A549 (cell line): ENCODE measurements at regions of chr1 and their contacts with region 1.

Region 1: DNA sequence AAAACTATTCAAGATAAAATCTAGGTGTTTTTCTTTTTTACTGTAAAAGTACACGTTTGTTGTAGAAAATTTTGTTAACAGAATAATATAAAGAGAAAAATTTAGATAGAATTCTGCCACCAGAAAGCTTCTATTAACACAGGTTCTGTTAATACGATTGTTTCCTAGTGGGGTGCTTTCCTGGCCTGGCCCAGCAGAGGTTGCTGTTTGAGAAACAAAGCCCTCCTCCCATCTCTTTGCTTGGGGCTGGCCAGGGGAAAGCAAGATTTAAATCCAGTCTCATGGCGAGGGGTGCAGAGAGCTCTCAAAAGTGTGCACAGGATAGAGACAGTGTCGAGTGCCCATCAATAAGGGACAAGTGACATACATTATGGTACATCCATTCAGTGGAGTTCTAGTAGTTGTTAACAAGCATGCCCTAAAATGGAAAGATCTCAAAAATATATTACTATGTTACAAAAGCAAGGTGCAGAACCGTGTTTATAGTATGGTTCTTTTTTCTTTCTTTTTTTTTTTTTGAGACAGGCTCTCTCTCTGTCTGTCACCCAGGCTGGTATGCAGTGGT is 14.6 kb upstream of the ACBD3 start:
- DNase-seq: peak in 1 of 2 experiments; percentile 21
- ATAC-seq: peak in 1 of 2 experiments; percentile 41; a peak in 4 of 6 replicates
- H3K4me3 ChIP-seq: no peak overlapping the region
- H3K27ac ChIP-seq: no peak overlapping the region
- H3K4me1 ChIP-seq: no peaks in the 10 kb centered on the region
- CTCF ChIP-seq: no peak
- EP300 ChIP-seq: no peak
- POLR2A ChIP-seq: no peak
- RAD21 ChIP-seq: peak in 1 of 2 experiments; percentile 42; a peak in 1 of 5 replicates

Region 2: GRCh38 chr1:225808136-225808535 is 393.0 kb before region 1 on chr1:
- CTCF ChIA-PET with region 1: no interaction called
- POLR2A ChIA-PET with region 1: no interaction called
- DNase-seq: no peak
- ATAC-seq: no peak
- H3K4me3 ChIP-seq: no peak overlapping the region
- H3K27ac ChIP-seq: no peak overlapping the region
- H3K4me1 ChIP-seq: peaks cover 22% of the 10 kb centered on the region
- CTCF ChIP-seq: no peak
- EP300 ChIP-seq: no peak
- POLR2A ChIP-seq: no peak
- RAD21 ChIP-seq: no peak

Region 3: DNA sequence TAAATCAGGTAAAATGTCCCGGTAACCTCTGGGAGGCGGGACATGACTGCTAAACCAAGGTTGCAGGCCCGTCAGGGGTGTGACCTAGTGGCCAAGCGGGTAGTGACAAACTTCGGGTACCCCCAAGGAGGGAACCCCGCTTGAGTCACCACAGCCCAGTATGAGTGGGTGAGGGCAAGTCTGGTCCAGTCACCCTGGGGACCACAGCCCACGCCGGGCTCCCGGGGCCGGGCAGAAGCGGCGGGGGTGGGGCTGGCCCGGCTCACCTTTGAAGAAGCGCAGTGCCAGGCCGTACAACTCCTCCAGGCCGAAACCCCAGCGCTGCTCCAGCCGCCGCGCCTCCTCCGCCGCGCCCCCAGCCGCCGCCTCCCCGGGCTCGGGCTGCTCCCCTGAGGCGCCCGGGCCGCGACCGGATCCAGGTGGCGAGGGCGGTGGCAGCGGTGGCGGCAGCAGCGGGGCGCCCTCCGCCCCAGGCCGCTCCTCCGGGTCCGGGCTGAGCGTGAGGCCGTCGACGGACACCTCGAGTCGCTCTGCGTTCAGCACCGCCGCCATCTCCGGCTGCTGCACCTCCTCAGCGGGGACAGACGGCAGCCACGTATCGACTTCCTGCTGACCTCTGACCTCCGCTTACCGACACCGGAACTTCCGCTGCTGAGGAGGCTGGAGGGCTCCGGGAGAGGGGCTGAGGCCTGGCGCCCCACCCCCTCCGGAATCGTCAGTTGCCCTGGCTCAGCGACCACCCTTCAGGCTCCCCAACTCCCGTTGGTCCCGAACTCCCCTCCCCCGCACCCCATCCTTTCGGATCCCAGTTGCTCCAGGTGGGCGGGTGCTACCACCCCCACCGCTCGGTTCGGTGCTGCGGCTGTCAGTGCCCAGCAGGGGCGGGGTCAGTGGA is 14.7 kb before region 1 on chr1 and contains the start of gene ACBD3:
- CTCF ChIA-PET with region 1: interaction called, 13 read pairs
- POLR2A ChIA-PET with region 1: interaction called, 4 read pairs
- DNase-seq: peak; percentile 88 to 89
- ATAC-seq: peak; percentile 97 to 99
- H3K4me3 ChIP-seq: peak within 1 kb of the TSS; percentile 73
- H3K27ac ChIP-seq: peak within 1 kb of the TSS; percentile 85 to 97
- H3K4me1 ChIP-seq: peaks cover 32% of the 10 kb centered on the region
- CTCF ChIP-seq: no peak
- EP300 ChIP-seq: no peak
- POLR2A ChIP-seq: peak; percentile 96
- RAD21 ChIP-seq: no peak
- polyA plus RNA-seq, gene ACBD3: 42.4 and 52.9 TPM in 2 replicates

Region 4: DNA sequence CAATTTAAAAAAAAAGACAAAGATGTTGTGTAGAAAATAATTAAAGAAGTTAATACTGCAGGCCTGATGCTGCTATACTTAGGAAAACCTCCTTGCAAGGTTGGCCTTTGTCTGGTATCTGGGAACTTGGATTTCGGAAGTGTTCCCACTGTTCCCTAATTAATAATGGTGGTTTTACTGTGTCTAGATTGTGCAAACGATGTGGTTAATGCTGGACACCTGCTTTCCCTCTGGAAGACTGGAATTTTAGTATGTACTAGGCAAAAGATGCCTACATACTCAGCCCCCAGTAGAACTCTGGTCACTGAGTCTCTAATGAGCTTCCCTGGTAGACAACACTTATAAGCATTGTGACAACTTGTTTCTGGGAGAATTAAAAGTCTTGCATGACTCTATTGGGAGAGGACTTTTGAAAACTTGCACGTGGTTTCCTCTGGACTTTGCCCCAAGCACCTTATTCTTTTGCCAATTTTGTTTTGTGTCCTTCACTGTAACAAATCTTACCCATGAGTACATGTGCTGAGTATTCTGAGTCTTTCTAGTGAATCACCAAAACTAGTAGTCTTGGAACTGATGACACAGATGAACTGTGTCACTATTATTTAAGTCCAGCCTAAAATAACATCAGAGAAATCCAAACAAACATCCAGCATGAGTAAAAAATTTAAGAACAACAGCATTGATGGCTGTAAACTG is 67.5 kb after region 1 on chr1:
- CTCF ChIA-PET with region 1: no interaction called
- POLR2A ChIA-PET with region 1: no interaction called
- DNase-seq: peak; percentile 7 to 12
- ATAC-seq: peak; percentile 45 to 47; a peak in 3 of 6 replicates
- H3K4me3 ChIP-seq: no peak overlapping the region
- H3K27ac ChIP-seq: peak overlapping the region in 1 of 2 experiments; percentile 4; a peak in 1 of 6 replicates
- H3K4me1 ChIP-seq: peaks cover 16% of the 10 kb centered on the region
- CTCF ChIP-seq: no peak
- EP300 ChIP-seq: no peak
- POLR2A ChIP-seq: no peak
- RAD21 ChIP-seq: no peak